Posterior vena cava (tissue), 2 donors: ENCODE measurements at regions of chr7 and their contacts with region 1.

Region 1: DNA sequence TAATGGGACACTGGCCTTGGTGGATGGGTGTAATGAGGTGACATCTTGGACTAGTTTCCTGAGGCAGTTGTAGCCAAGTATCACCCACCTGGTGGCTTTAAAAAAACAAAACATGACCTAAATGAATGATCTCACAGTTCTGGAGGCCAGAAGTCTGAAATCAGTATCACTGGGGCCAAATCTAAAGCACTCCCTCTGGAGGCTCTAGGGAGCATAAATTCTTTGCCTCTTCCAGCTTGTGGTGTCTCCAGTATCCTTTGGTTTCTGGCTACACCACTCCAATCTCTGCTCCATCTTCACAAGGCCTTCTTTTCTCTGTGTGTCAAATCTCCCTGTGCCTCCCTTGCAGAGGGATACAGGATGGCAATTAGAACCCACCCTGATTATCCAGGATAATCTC is 342.9 kb downstream of the CALN1 start:
- DNase-seq: no peak

Region 2: GRCh38 chr7:72053292-72053691 is 16.0 kb before region 1 on chr7:
- intact Hi-C with region 1: loop called in 1 of 2 experiments (anchors 1 kb)
- DNase-seq: no peak

Region 3: DNA sequence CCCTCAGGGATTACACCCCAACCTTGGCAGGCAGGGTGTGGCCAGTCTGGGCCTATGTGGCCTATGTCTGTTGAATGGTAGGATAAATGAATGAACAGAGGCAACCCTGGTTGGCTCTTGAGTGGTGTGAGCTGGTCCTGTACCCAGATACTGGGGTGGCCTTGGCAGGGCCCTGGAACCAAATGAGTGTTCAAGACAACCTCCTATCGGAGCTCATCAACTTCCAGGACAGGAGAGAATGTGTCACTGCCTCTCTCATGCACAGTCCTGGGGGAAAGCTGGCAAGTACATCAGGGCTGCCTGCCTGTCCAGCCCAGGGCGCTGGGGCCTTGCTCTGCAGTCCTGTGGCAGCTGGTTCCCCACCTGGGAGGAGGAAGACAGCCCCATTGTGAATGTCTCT is 71.3 kb after region 1 on chr7:
- intact Hi-C with region 1: loop called in 1 of 2 experiments (anchors 2 kb)
- DNase-seq: no peak